ENCODE measurements at regions of chr10 and their contacts with region 1.

Region 1: DNA sequence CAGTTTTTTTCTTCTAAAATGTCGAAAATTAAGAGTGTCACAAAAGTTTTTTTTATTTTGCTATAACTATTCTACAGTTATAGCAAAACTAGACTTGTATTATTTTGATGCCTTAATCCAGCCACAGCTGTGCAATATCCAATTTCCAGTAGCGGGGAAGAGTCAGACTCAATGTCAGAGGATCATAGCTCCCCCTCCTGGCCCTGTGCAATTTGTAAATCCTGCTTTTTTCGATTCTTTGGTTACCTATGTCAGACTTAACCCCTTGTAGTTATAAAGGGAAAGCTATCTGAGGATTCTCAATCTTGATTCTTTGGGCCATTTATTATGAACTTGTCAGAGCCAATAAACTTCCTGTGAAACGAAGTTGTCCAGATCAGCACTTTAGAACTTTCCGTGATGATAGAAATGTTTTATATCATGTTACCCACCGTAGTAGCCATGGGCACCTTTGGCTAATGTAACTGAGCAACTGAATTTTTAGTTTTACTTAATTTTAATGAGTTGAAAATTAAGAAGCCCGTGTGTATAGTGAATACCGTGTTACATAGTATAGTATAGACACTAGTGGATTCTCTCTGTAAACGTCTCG is 87.7 kb upstream of the PRKCQ start:
- DNase-seq: peak in 6 of 10 donors; percentile 11 to 66 (median 32)

Region 2: DNA sequence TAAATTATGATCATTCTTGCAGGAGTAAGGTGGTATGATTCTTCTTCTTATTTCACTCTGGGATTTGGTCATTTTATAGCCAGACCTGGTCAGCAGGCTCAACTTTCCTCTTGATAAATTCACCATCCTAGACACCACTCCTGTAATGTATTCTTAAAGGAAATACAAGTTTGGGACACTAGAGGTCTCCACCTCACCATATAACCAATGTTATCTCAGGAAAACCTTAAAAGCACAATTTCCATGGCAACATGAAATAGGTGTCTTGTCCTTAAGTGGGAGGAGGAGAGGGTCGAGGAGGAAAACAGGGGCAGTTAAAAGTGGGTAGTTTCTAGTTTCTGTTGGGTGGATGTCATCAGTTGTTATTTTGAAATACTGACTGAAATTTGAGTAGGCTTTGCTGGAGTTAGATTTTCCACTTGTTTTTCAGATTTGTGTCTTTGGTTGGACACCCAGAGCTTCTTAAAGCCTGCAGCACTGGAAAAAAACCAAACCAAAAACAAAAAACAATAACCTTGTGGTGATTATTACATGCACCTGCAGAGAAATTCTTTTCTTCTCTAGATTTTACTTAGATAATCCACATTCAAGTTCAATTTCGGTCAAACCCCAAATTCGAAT is 250.8 kb before region 1 on chr10:
- intact Hi-C with region 1: loop called (anchors 1 kb)
- DNase-seq: no peak

Region 3: DNA sequence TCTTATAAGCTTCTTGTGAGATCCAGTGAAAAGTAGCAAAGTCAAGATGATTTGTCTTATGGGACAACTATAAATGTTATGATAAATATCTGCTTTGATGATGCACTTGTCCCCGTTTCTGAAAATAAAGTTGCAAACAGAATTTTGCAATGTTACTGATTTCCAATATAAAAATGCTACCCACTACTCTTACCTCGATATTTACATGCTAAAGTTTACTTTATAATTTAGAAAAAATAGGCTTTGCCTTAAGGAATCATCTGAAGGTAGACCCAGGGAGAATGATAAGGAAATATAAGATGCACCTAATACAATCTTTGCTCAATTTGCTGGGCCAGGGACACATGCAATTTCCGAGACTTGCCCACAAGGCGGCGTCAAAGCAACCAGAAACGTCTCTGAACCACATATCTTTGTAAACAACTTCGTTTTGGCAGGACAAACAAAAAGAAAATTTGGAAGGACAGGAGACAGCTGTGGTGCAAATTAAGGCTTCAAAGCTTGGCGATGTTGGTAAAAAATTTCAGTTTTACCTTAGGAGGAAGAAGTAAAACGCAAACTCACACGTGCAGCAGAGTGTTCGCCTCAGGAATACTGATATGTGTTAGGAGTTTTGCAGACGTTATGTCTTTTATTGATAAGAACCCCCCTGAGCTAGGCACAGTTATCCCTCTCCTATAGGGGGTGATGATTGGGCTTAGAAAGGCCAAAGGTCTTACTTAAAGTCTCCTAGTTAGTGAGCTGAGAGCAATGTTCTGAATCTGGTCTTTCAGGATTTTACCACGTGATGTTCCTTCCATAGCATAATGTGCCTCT is 222.1 kb before region 1 on chr10:
- intact Hi-C with region 1: loop called (anchors 5 kb)
- DNase-seq: peak; percentile 36 to 95 (median 76)

Region 4: DNA sequence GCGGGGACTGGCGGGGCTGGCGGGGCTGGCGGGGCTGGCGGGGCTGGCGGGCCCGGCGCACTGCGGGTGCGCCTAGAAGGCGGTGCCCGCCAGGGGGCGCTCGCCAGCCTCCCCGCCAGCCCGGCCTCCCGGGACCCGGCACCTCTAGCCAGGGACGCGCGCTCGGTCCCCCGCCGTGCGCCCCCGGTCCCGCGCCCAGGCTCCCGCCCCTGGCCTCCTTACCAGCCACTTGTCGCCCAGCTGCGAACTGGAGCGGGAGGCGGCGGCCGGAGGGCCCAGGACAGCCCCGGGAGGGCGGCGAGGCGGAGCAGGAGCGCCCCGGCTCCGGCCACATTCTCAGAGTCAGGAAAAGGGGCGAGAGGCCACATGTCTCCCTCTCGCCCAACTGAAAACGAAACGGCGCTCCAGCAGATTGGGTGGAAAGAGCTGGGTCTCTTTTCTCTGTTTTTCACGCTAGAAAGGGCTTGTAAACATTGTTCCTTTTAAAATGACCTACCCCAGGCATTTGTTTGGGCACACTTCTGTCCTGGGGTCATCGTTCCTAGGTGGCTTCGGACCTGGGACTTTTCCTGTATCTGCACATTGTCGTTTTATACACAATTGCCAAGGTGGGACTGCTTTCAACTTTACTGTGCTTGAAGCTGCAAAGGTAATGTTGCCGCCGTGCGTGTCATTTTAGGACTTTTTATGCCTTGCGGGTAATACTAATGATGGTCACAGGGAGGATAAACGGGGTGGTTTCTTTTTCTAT is 87.3 kb before region 1 on chr10:
- intact Hi-C with region 1: loop called (anchors 1 kb)
- DNase-seq: peak; percentile 72 to 98 (median 78)

Region 5: DNA sequence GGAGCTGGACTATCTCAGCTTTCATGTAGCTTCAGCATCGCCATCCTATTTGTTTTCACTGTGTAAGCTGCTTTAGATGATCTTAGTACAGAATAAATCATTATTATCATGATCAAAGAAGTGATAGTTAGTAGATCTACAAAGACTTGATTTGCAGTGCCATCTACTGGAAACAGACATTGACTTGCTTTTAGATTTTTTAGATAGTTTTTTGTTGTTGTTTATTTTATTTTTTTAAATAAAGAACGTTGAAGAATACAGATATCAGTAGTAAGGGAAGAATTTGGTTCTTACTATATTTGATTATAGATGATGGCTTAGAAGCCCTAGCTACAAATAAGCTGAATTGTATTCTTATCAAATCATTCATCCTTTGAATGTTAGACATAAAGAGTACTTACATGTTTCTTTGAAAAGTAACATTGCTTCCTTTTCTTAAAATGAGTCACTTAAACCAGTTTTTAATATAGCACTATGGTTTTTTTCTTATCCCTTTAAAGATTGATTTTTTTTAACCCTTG is 749.4 kb after region 1 on chr10:
- intact Hi-C with region 1: loop called (anchors 1 kb)
- DNase-seq: no peak